ENCODE measurements at regions of chr2 and their contacts with region 1.

Region 1: GRCh38 chr2:184646177-184646576 is 47.8 kb downstream of the ZNF804A start:
- DNase-seq: peak; percentile 52
- ATAC-seq: peak; percentile 81
- H3K4me3 ChIP-seq: no peak overlapping the region
- H3K27ac ChIP-seq: no peak overlapping the region
- H3K4me1 ChIP-seq: peaks cover 5% of the 10 kb centered on the region
- H3K27me3 ChIP-seq: no peaks in the 10 kb centered on the region
- CTCF ChIP-seq: no peak
- POLR2A ChIP-seq: no peak
- RAD21 ChIP-seq: no peak

Region 2: DNA sequence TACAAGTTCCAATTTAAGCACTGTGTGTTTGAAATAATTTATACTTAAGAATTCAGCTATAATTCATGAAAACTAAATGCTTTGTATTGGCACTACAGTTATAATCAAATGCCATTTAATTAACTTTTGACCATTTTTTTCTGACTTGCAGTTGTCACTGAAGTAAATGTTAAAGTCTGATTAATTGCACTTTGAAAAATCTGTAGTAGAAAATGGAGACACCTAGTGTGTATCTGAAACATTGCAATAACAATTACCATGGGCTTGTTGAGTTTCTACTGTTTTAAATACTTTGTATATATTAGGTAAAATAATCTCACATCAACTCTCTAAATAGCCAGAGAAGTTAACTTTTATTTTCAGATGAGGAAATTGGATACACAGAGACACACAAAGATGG is 633.8 kb after region 1 on chr2:
- CTCF ChIA-PET with region 1: no interaction called
- POLR2A ChIA-PET with region 1: no interaction called
- dilution Hi-C with region 1: no loop called
- in situ Hi-C with region 1: no loop called
- intact Hi-C with region 1: loop called (anchors 10 kb)
- DNase-seq: peak; percentile 3
- ATAC-seq: no peak
- H3K4me3 ChIP-seq: no peak overlapping the region
- H3K27ac ChIP-seq: no peak overlapping the region
- H3K4me1 ChIP-seq: no peaks in the 10 kb centered on the region
- H3K27me3 ChIP-seq: no peaks in the 10 kb centered on the region
- CTCF ChIP-seq: peak; percentile 45
- POLR2A ChIP-seq: no peak
- RAD21 ChIP-seq: peak; percentile 40

Region 3: GRCh38 chr2:185738679-185739472 is 1092.7 kb after region 1 on chr2 and contains the start of gene FSIP2:
- CTCF ChIA-PET with region 1: no interaction called
- POLR2A ChIA-PET with region 1: no interaction called
- dilution Hi-C with region 1: no loop called
- in situ Hi-C with region 1: loop called (anchors 25 kb)
- intact Hi-C with region 1: no loop called
- DNase-seq: peak; percentile 9
- ATAC-seq: peak; percentile 88
- H3K4me3 ChIP-seq: peak within 1 kb of the TSS; percentile 12; the same call in 1 of the 2 replicates
- H3K27ac ChIP-seq: no peak within 1 kb of the TSS
- H3K4me1 ChIP-seq: no peaks in the 10 kb centered on the region
- H3K27me3 ChIP-seq: no peaks in the 10 kb centered on the region
- CTCF ChIP-seq: peak; percentile 46
- POLR2A ChIP-seq: no peak
- RAD21 ChIP-seq: peak; percentile 26; the same call in 1 of the 2 replicates
- total RNA-seq, gene FSIP2: under 0.01 TPM in 1 of 2 replicates, not detected in the other

Measured in IMR-90 (cell line).